Stomach (tissue), 19 donors: ENCODE measurements at regions of chr2 and their contacts with region 1.

Region 1: DNA sequence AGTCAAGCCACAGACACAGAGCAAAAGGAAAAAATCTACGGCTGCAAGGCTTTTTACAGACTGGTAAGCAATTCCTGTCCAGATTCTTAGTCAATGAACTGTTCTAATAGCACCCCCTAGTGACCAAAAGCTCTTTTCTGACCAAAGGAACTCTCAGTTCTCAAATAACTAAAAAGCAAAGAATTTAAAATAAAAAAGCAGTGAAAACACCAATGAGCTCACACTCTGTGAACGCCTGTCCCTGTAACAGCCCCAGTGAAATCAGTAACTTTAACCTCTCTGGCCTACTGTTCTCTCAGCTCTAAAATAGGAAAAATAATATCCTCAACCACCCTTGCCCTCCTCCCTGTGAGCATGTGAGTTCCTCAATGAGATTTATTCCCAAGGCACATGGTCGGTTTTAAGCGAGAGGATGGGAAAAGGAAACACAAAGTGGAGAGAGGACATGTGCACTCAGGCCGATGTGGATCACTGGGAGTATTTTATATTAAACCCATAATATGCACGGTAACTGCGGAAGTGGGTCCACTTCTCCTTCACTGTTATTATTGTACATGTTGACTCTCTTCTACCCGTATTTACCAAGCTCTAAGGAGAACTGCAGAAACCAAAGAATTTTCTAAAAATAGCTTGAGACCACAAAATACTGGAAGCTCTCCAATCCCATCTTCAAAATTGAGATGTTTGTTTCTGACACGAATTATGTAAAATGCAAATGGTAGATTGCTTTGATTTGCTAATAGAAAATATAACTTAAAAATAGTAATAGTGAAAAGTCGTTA is 128.5 kb downstream of the STK39 start:
- DNase-seq: peak in 1 of 2 donors; percentile 89
- H3K4me3 ChIP-seq: no peak overlapping the region
- H3K27ac ChIP-seq: peak overlapping the region in 2 of 5 donors; percentile 19 to 60
- H3K4me1 ChIP-seq: peaks cover 0 to 14% (median 5%) of the 10 kb centered on the region in 4 donors
- H3K27me3 ChIP-seq: no peaks in the 10 kb centered on the region
- CTCF ChIP-seq: peak in 5 of 7 experiments; percentile 44 to 64 (median 59)
- EP300 ChIP-seq: no peak
- POLR2A ChIP-seq: no peak

Region 2: DNA sequence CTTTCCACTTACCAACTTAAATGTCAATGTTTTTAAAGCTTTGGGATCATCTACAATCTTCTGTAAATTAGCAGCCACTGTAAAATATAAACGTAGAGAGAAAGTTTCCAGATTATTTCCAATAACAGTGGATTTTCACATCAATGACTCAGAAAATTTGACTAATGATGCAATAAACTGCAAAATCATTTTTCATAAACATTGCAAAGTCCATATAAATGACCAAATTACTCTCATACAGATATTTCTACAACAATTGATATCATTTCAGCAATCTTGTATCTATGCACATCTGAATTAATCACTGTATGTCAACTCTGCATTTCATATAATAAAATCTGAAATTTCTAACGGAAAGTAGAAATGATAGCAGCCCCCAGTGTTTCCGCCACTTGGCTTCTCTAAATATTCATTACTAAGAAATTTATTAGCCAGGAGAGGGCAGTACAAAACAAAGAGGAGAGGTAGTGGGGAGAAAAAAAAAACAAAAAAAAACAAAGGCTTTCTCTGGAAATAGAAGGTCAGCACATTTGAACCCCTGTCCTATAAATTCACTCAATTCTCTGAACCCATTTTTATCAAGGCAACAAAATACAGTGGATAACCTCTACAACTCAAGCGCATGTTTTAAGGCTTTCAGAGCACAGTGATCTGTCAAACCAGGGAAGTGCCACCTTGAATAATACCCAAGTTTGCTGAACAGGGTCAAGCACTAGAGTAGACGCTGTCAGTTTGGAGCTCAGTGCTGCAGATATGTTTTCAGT is 154.1 kb before region 1 on chr2:
- intact Hi-C with region 1: loop called (anchors 10 kb)
- DNase-seq: no peak
- H3K4me3 ChIP-seq: no peak overlapping the region
- H3K27ac ChIP-seq: no peak overlapping the region
- H3K4me1 ChIP-seq: peaks cover 0 to 22% (median 4%) of the 10 kb centered on the region in 4 donors
- H3K27me3 ChIP-seq: no peaks in the 10 kb centered on the region
- CTCF ChIP-seq: peak in 2 of 7 experiments; percentile 25 to 36
- EP300 ChIP-seq: no peak
- POLR2A ChIP-seq: no peak

Region 3: DNA sequence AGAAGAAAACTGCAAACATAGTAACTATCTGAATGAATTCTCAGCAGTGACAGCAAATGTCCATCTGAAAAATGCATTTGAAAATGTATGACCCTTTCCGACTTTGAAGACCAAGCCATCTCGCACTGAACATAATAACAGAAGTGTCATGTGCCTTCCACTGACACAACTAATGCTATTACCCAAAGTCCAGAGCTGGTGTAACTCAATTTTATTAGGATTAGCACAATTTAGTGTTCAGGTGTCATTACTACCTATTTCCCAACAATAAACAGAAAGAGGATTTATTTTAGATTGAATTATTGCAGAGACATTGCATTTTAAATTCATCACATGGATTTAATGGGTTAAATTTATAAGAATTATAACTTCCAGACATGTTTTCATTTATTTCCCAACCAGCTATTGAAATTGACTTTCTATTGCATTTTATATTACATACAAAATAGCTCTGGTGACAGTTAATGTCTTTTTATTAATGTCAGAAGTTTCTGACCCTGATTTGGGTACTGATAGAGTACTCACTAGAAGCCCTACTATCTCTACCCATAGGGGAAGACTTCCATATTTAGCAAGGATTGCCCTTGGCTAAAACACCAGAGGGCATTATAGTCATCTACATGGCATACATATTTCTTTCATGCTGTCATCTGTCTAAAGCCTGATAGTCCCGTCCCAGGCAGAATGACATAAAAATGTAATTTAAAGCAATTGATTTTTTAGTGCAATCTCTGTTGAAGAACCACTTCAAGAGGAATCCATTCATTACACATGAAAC is 135.4 kb after region 1 on chr2:
- intact Hi-C with region 1: no loop called
- DNase-seq: no peak
- H3K4me3 ChIP-seq: no peak overlapping the region
- H3K27ac ChIP-seq: no peak overlapping the region
- H3K4me1 ChIP-seq: peaks cover 0 to 27% (median 12%) of the 10 kb centered on the region in 4 donors
- H3K27me3 ChIP-seq: no peaks in the 10 kb centered on the region
- CTCF ChIP-seq: no peak
- EP300 ChIP-seq: no peak
- POLR2A ChIP-seq: no peak